Mammary epithelial cell (primary cell): ENCODE measurements at regions of chr12 and their contacts with region 1.

Region 1: GRCh38 chr12:120904197-120904773 is at the start of gene SPPL3:
- DNase-seq: peak; percentile 77
- H3K4me3 ChIP-seq: peak within 1 kb of the TSS; percentile 61 to 87 (median 86)
- H3K27ac ChIP-seq: peak within 1 kb of the TSS; percentile 61
- H3K4me1 ChIP-seq: peaks cover 30% of the 10 kb centered on the region
- H3K27me3 ChIP-seq: no peaks in the 10 kb centered on the region
- CTCF ChIP-seq: no peak
- total RNA-seq, gene SPPL3: 11.2 to 54.1 TPM

Region 2: DNA sequence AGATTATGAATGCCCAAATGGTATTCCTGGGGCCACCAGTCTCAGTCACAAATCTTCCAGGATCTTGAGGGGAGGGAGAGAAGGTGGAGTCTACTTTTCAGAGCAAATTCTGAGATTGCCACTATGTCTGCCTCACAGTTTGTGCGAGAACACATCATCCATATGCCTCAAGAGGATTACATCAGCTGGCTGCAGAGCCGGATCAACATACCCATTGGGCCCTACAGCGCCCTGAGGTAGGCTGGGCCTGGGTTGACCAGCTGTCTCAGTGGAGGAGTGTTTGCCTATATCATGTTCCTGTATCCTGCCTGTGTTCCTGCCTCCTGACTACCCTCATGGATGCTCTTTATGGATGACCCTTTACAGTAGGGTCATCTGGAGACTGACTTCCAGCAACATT is 1363.8 kb before region 1 on chr12:
- CTCF ChIA-PET with region 1: no interaction called
- dilution Hi-C with region 1: no loop called
- in situ Hi-C with region 1: no loop called
- intact Hi-C with region 1: no loop called
- DNase-seq: no peak
- H3K4me3 ChIP-seq: no peak overlapping the region
- H3K27ac ChIP-seq: no peak overlapping the region
- H3K4me1 ChIP-seq: no peaks in the 10 kb centered on the region
- H3K27me3 ChIP-seq: no peaks in the 10 kb centered on the region
- CTCF ChIP-seq: no peak

Region 3: GRCh38 chr12:120856980-120857379 is 47.3 kb before region 1 on chr12:
- CTCF ChIA-PET with region 1: interaction called, 4 read pairs
- dilution Hi-C with region 1: no loop called
- in situ Hi-C with region 1: no loop called
- intact Hi-C with region 1: loop called (anchors 5 kb)
- DNase-seq: peak; percentile 61
- H3K4me3 ChIP-seq: no peak overlapping the region
- H3K27ac ChIP-seq: no peak overlapping the region
- H3K4me1 ChIP-seq: peaks cover 16% of the 10 kb centered on the region
- H3K27me3 ChIP-seq: no peaks in the 10 kb centered on the region
- CTCF ChIP-seq: peak; percentile 25 to 58

Region 4: GRCh38 chr12:120879102-120879501 is 25.2 kb before region 1 on chr12:
- CTCF ChIA-PET with region 1: no interaction called
- dilution Hi-C with region 1: no loop called
- in situ Hi-C with region 1: no loop called
- intact Hi-C with region 1: loop called (anchors 1 kb)
- DNase-seq: peak; percentile 25
- H3K4me3 ChIP-seq: no peak overlapping the region
- H3K27ac ChIP-seq: no peak overlapping the region
- H3K4me1 ChIP-seq: no peaks in the 10 kb centered on the region
- H3K27me3 ChIP-seq: no peaks in the 10 kb centered on the region
- CTCF ChIP-seq: no peak

Region 5: GRCh38 chr12:120944645-120945231 is 40.5 kb after region 1 on chr12:
- CTCF ChIA-PET with region 1: no interaction called
- dilution Hi-C with region 1: no loop called
- in situ Hi-C with region 1: no loop called
- intact Hi-C with region 1: loop called (anchors 5 kb)
- DNase-seq: peak; percentile 30
- H3K4me3 ChIP-seq: no peak overlapping the region
- H3K27ac ChIP-seq: no peak overlapping the region
- H3K4me1 ChIP-seq: no peaks in the 10 kb centered on the region
- H3K27me3 ChIP-seq: no peaks in the 10 kb centered on the region
- CTCF ChIP-seq: peak; percentile 81 to 89